HepG2 (cell line): ENCODE measurements at regions of chr17 and their contacts with region 1.

Region 1: GRCh38 chr17:41322094-41322902 is 6.8 kb upstream of the KRTAP17-1 start:
- DNase-seq: peak; percentile 38
- ATAC-seq: peak; percentile 54; the same call in 2 of the 3 replicates
- H3K4me3 ChIP-seq: no peak overlapping the region
- H3K27ac ChIP-seq: no peak overlapping the region
- H3K4me1 ChIP-seq: no peaks in the 10 kb centered on the region
- H3K27me3 ChIP-seq: peaks cover 0 to 5% of the 10 kb centered on the region in 2 experiments; a peak in 1 of 5 replicates
- CTCF ChIP-seq: peak; percentile 71
- EP300 ChIP-seq: no peak
- POLR2A ChIP-seq: no peak
- RAD21 ChIP-seq: 0 out of 2 replicates have a peak, but pooled peaks have one; percentile 35

Region 2: GRCh38 chr17:40854159-40854814 is 468.0 kb before region 1 on chr17:
- CTCF ChIA-PET with region 1: no interaction called
- POLR2A ChIA-PET with region 1: no interaction called
- in situ Hi-C with region 1: loop called (anchors 5 kb)
- intact Hi-C with region 1: loop called (anchors 5 kb)
- DNase-seq: peak; percentile 55
- ATAC-seq: peak; percentile 46; the same call in 1 of the 3 replicates
- H3K4me3 ChIP-seq: no peak overlapping the region
- H3K27ac ChIP-seq: no peak overlapping the region
- H3K4me1 ChIP-seq: peaks cover 10% of the 10 kb centered on the region; the same call in 1 of the 2 replicates
- H3K27me3 ChIP-seq: 0 out of 5 replicates have a peak, but pooled peaks cover 0 to 3% of the 10 kb centered on the region in 2 experiments
- CTCF ChIP-seq: no peak
- EP300 ChIP-seq: peak in 1 of 2 experiments; percentile 66; a peak in 2 of 4 replicates
- POLR2A ChIP-seq: no peak
- RAD21 ChIP-seq: no peak